ENCODE measurements at regions of chr12 and their contacts with region 1.

Region 1: GRCh38 chr12:96177013-96177412 is 17.2 kb upstream of the ELK3 start:
- DNase-seq: peak; percentile 90
- H3K4me3 Mint-ChIP-seq: peak overlapping the region; percentile 10
- H3K27ac Mint-ChIP-seq: peak overlapping the region; percentile 83
- H3K4me1 Mint-ChIP-seq: peaks cover 24% of the 10 kb centered on the region
- H3K27me3 Mint-ChIP-seq: no peaks in the 10 kb centered on the region

Region 2: DNA sequence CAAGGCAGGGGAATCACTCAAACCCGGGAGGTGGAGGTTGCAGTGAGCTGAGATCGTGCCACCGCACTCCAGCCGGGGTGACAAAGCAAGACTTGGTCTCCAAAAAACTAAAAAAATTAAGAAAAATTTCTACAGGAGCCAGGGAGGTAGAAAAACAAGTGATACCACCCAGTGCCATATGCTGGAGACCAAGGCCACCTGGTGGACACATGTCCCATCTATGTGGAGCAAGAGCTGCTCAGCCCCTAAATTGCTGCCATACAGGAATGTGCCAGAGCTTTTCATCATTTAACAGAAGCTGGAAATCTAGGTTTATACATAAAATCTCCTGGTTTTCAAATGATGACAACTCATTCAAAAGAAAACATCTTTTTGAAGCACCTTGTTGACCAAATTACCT is 44.2 kb before region 1 on chr12:
- CTCF ChIA-PET with region 1: interaction called, 4 read pairs
- POLR2A ChIA-PET with region 1: no interaction called
- intact Hi-C with region 1: loop called (anchors 2 kb)
- DNase-seq: peak; percentile 31
- H3K4me3 Mint-ChIP-seq: no peak overlapping the region
- H3K27ac Mint-ChIP-seq: no peak overlapping the region
- H3K4me1 Mint-ChIP-seq: peaks cover 22% of the 10 kb centered on the region
- H3K27me3 Mint-ChIP-seq: peaks cover 6% of the 10 kb centered on the region

Region 3: DNA sequence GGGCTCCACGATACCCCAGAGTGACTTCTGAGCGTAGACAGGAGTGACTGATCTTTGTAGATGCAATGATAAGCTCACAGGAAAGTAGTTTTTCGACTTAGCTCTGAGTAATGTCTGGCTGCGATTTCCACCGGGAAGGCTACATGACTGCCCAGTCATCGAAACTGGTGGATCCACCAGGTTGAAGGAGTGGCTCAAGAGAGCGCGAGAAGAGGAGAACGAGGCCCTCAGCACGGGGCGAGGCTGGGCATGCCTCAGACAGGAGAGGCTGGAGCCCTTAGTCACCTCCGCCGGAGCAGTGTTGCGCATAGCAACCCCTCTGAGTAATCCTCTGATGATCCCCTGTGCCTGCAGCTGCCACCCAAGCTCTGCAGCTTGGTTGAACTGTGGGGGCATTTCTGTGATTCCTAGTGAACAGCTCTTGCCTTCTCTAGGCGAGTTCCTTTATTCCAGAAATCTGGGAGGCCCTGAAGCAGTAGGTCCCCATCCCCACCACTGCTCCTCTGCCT is 42.7 kb after region 1 on chr12:
- CTCF ChIA-PET with region 1: interaction called, 22 read pairs
- POLR2A ChIA-PET with region 1: no interaction called
- intact Hi-C with region 1: loop called (anchors 1 kb)
- DNase-seq: peak; percentile 36
- H3K4me3 Mint-ChIP-seq: no peak overlapping the region
- H3K27ac Mint-ChIP-seq: peak overlapping the region; percentile 14
- H3K4me1 Mint-ChIP-seq: peaks cover 53% of the 10 kb centered on the region
- H3K27me3 Mint-ChIP-seq: no peaks in the 10 kb centered on the region

Region 4: DNA sequence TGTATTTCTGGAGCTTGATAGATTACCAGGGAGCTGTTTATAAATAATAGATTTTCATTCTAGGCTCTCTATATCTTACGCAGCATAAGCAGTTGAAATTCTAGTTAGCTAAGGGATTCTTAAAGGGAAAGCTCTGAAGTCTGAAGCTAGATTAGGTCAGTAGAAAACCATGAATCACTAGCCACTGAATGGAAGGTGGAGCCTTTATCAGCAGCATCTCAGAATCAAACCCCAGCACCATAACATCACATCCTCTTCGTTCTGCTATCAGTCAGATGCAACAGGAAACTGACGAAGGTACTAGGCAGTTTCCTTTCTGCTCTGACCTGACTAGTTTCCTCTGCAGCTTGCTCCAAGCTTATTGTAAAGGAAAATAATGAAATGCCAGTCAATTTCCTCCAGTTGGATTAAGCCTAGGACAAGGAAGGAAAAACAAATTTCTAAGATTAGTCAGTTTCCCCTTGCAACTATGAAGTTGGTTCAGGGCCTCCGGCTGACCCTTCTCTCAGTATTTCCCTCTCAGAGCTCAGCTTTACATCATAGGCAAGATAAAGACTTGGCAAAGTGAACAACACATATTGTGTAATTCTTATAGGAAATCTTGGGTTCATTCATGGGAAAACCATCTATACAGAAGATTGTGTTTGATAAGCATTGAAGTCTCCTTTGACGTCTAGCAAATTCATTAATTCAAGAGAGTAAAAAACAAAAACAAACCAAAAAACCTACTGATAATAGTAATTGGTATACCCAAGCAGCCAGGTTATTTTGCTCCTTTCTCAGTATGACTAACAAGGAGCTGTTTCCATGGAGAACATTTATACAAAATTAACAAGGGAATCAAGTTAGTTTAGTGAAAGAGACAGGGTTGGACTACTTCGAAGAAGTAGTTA is 268.9 kb after region 1 on chr12:
- CTCF ChIA-PET with region 1: interaction called, 6 read pairs
- POLR2A ChIA-PET with region 1: interaction called, 5 read pairs
- intact Hi-C with region 1: loop called (anchors 1 kb)
- DNase-seq: peak; percentile 72
- H3K4me3 Mint-ChIP-seq: peak overlapping the region; percentile 60
- H3K27ac Mint-ChIP-seq: peak overlapping the region; percentile 95
- H3K4me1 Mint-ChIP-seq: peaks cover 38% of the 10 kb centered on the region
- H3K27me3 Mint-ChIP-seq: no peaks in the 10 kb centered on the region

Region 5: GRCh38 chr12:96571101-96571862 is 394.3 kb after region 1 on chr12:
- CTCF ChIA-PET with region 1: no interaction called
- POLR2A ChIA-PET with region 1: no interaction called
- intact Hi-C with region 1: loop called (anchors 1 kb)
- DNase-seq: peak; percentile 33
- H3K4me3 Mint-ChIP-seq: peak overlapping the region; percentile 40
- H3K27ac Mint-ChIP-seq: peak overlapping the region; percentile 65
- H3K4me1 Mint-ChIP-seq: peaks cover 26% of the 10 kb centered on the region
- H3K27me3 Mint-ChIP-seq: peaks cover 4% of the 10 kb centered on the region